ENCODE measurements at regions of chr12 and their contacts with region 1.

Region 1: DNA sequence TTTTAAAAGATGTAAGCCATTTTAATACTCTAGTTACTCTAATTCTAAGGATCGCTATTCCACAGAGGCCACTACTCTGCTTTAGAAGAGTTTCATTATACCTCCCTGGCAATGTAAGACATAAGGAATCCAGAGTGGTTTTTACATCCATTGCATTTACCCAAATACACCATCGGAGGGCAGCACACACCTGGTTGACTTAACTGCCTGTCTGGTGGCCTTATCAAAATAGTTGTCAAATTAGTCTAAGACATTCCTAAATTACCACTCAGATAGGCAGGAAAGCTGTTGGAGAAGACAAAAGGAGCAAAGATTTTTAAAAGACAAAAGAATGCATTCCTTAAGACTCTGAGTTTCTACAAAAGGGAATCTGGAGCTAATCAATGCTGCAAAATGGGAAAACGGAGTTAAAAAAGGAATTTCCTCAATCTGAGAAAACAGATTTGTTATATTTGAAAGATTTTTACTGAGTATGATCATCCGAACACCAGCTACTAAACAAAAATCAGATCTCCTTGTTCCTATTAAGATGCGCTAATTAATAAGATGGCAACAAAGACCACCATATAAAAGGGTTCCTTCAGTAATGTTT is 33.8 kb upstream of the FGD4 start:
- DNase-seq: peak in 3 of 5 donors; percentile 36 to 51 (median 42)
- ATAC-seq: peak in 3 of 4 donors; percentile 70 to 77 (median 76)
- H3K4me3 ChIP-seq: no peak overlapping the region
- H3K27ac ChIP-seq: no peak overlapping the region
- H3K4me1 ChIP-seq: peaks cover 0 to 6% (median 0%) of the 10 kb centered on the region in 12 donors
- H3K27me3 ChIP-seq: no peaks in the 10 kb centered on the region
- CTCF ChIP-seq: peak; percentile 70 to 91 (median 82)
- POLR2A ChIP-seq: no peak

Region 2: GRCh38 chr12:31702047-31702446 is 663.5 kb before region 1 on chr12:
- intact Hi-C with region 1: no loop called
- DNase-seq: no peak
- ATAC-seq: no peak
- H3K4me3 ChIP-seq: no peak overlapping the region
- H3K27ac ChIP-seq: no peak overlapping the region
- H3K4me1 ChIP-seq: no peaks in the 10 kb centered on the region
- H3K27me3 ChIP-seq: no peaks in the 10 kb centered on the region
- CTCF ChIP-seq: peak in 6 of 12 donors; percentile 15 to 38 (median 25)
- POLR2A ChIP-seq: no peak

Region 3: GRCh38 chr12:32444895-32445294 is 79.3 kb after region 1 on chr12:
- intact Hi-C with region 1: loop called in 4 of 10 experiments (anchors 5 to 10 kb)
- DNase-seq: no peak
- ATAC-seq: no peak
- H3K4me3 ChIP-seq: no peak overlapping the region
- H3K27ac ChIP-seq: no peak overlapping the region
- H3K4me1 ChIP-seq: peaks cover 0 to 40% (median 14%) of the 10 kb centered on the region in 12 donors
- H3K27me3 ChIP-seq: no peaks in the 10 kb centered on the region
- CTCF ChIP-seq: no peak
- POLR2A ChIP-seq: no peak

Region 4: DNA sequence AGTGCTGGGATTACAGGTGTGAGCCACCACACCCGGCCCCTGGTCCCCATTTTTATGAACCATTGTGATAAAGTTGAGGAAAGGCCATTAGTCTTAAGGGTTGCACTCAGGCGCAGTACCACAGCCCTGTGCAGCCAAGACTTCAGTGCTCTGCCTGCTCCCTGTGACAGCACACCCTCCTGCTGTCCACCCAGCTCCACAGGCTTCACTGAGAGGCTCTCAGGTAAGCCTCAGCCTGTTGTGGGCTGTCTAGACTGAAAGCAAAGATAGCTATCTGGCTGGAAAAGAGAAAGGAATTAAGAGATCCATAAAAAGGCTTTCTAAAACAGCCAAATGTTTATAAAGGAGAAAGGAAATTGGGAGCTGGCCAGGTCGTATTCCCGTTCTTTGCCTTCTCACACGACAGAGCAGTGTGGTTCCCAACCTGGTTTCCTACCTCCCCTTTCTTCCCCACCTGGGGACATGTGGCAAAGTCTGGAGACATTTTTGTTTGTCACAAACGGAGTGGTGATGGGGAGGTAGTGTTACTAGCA is 294.4 kb after region 1 on chr12:
- intact Hi-C with region 1: loop called in 5 of 10 experiments (anchors 5 kb)
- DNase-seq: no peak
- ATAC-seq: no peak
- H3K4me3 ChIP-seq: no peak overlapping the region
- H3K27ac ChIP-seq: peak overlapping the region in 10 of 12 donors; percentile 4 to 69 (median 48)
- H3K4me1 ChIP-seq: peaks cover 0 to 17% (median 7%) of the 10 kb centered on the region in 12 donors
- H3K27me3 ChIP-seq: no peaks in the 10 kb centered on the region
- CTCF ChIP-seq: no peak
- POLR2A ChIP-seq: no peak

Region 5: GRCh38 chr12:32671930-32672780 is 306.6 kb after region 1 on chr12:
- intact Hi-C with region 1: loop called (anchors 1 to 5 kb)
- DNase-seq: peak in 2 of 5 donors; percentile 53 to 55
- ATAC-seq: peak; percentile 50 to 91 (median 84)
- H3K4me3 ChIP-seq: no peak overlapping the region
- H3K27ac ChIP-seq: no peak overlapping the region
- H3K4me1 ChIP-seq: peaks cover 0 to 10% (median 0%) of the 10 kb centered on the region in 12 donors
- H3K27me3 ChIP-seq: no peaks in the 10 kb centered on the region
- CTCF ChIP-seq: peak; percentile 34 to 79 (median 61)
- POLR2A ChIP-seq: no peak

Region 6: DNA sequence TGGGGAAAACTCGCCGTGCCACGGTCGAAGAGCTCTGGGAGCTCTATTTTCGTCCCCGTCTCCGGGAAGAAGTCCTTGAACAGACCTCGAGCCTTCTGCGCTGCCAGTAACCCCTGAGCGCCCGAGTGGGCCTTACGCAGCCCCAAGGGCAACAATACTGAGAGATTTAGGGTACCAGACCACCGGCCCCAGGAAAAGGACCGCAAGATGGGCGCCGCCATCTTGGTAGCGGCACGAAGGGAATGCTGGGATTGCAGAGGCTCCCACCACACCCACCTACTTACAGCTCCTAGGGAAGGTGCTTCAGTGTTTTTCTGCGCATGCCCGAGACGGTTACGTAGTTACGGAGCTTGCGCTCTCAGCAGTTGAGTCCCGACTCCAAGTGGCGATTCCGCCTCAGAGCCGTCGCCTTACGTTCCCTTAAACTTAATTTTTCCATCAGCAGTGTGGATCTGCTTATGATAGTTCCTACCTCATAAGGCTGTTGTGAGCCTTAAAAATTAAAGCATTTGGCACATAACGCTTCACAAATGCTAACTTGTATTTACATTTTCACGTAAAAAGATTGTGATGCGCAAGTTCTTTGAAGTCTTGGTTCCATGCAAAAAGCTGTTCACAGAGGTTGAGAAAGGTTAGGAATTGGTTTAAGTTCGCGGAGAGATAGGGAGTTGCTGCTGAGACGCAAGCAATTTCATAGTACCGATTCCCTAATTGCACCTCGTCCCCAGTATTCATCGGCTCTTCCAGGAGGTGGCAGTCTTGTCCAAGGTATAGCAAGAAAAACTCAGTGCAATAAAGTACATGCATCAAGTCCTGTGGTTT is 390.3 kb after region 1 on chr12 and contains the start of gene YARS2:
- intact Hi-C with region 1: loop called in 1 of 10 experiments (anchors 10 kb)
- DNase-seq: peak; percentile 93 to 97 (median 96)
- ATAC-seq: peak; percentile 98 to 99 (median 99)
- H3K4me3 ChIP-seq: peak within 1 kb of the TSS; percentile 71 to 98 (median 84)
- H3K27ac ChIP-seq: peak within 1 kb of the TSS; percentile 61 to 95 (median 89)
- H3K4me1 ChIP-seq: peaks cover 5 to 28% (median 16%) of the 10 kb centered on the region in 12 donors
- H3K27me3 ChIP-seq: no peaks in the 10 kb centered on the region
- CTCF ChIP-seq: peak; percentile 61 to 88 (median 84)
- POLR2A ChIP-seq: peak in 1 of 2 donors; percentile 47
- total RNA-seq, gene YARS2: 7.7 to 19.4 (median 14.2) TPM